ENCODE measurements at regions of chr10 and their contacts with region 1.

Region 1: GRCh38 chr10:121469797-121470606 is 128.2 kb downstream of the FGFR2 start:
- DNase-seq: peak in 2 of 3 donors; percentile 37 to 42
- ATAC-seq: peak; percentile 81
- H3K4me3 ChIP-seq: no peak overlapping the region
- H3K4me1 ChIP-seq: no peaks in the 10 kb centered on the region
- CTCF ChIP-seq: no peak

Region 2: GRCh38 chr10:121310151-121310711 is 159.8 kb before region 1 on chr10:
- intact Hi-C with region 1: no loop called
- DNase-seq: no peak
- ATAC-seq: peak; percentile 61
- H3K4me3 ChIP-seq: no peak overlapping the region
- H3K4me1 ChIP-seq: peaks cover 2% of the 10 kb centered on the region
- CTCF ChIP-seq: no peak

Region 3: GRCh38 chr10:121418126-121418777 is 51.8 kb before region 1 on chr10:
- intact Hi-C with region 1: no loop called
- DNase-seq: no peak
- ATAC-seq: peak; percentile 77
- H3K4me3 ChIP-seq: no peak overlapping the region
- H3K4me1 ChIP-seq: peaks cover 11% of the 10 kb centered on the region
- CTCF ChIP-seq: no peak

Region 4: DNA sequence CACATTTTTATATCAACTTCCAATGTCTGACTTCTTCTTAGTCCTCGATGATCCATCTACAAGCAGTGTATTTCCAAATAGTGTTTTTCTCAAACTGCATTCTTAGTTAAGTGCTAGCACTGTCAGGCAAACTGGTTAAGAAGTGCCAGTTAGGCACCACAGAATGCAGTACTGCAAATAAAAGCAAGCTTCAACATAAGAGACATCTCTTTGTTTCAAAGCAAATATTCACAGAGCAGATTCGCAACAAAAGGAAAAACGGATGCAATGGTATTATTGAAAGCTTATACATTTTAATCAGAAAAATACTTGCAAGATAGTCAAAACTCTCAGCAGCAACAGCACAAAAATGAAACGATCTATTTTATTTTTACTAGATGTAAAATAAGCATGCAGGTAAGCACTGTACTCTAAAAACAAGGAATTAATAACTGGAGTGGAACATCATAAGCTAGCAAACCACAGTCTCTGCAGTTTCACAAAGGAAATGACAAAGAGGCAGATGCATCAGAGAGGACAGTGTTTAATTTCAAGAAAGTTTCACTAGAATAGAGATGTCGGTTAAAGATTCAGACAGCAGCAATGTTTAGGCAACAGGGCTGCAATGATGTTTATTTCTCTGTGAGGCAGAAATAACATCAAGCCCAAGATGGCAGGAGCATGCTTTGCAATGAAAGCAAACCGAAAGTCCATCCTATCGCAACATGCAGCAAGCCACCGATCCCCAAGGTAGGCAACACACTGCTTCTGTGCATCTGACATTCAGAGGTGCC is 46.3 kb after region 1 on chr10:
- intact Hi-C with region 1: loop called in 1 of 2 experiments (anchors 2 kb)
- DNase-seq: no peak
- ATAC-seq: no peak
- H3K4me3 ChIP-seq: no peak overlapping the region
- H3K4me1 ChIP-seq: no peaks in the 10 kb centered on the region
- CTCF ChIP-seq: no peak

Region 5: DNA sequence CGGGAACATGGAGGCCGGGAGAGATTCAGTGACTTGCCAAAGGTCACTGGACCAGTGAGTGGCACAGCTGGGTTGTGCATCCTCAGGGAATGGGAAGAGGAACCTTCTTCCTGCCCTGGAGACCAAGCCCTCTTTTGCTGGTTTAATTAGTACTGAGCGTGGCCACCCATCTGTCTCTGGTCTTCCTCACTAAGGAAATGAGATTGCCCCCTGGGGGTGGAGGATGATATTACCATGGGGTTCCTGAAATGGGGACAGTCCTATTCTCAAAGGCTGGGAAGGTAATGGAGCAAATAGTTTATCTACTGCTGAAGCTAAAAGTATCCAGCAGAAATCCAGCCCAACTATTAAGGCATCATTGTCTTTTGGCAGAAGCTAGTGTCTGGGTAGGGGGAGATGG is 226.9 kb after region 1 on chr10:
- intact Hi-C with region 1: no loop called
- DNase-seq: peak in 1 of 3 donors; percentile 74
- ATAC-seq: peak; percentile 63
- H3K4me3 ChIP-seq: no peak overlapping the region
- H3K4me1 ChIP-seq: no peaks in the 10 kb centered on the region
- CTCF ChIP-seq: no peak

Measured in mucosa of descending colon (tissue), 3 donors.